ENCODE measurements at regions of chr1 and their contacts with region 1.

Region 1: GRCh38 chr1:8712413-8713231 is 104.8 kb downstream of the RERE start:
- DNase-seq: no peak
- ATAC-seq: peak; percentile 52
- H3K4me3 Mint-ChIP-seq: peak overlapping the region; percentile 23
- H3K27ac Mint-ChIP-seq: peak overlapping the region; percentile 52
- H3K4me1 Mint-ChIP-seq: peaks cover 14% of the 10 kb centered on the region
- H3K27me3 Mint-ChIP-seq: no peaks in the 10 kb centered on the region

Region 2: GRCh38 chr1:8702071-8702849 is 10.4 kb before region 1 on chr1:
- POLR2A ChIA-PET with region 1: interaction called, 10 read pairs
- DNase-seq: no peak
- ATAC-seq: no peak
- H3K4me3 Mint-ChIP-seq: peak overlapping the region; percentile 84
- H3K27ac Mint-ChIP-seq: peak overlapping the region; percentile 89
- H3K4me1 Mint-ChIP-seq: peaks cover 38% of the 10 kb centered on the region
- H3K27me3 Mint-ChIP-seq: peaks cover 23% of the 10 kb centered on the region

Region 3: DNA sequence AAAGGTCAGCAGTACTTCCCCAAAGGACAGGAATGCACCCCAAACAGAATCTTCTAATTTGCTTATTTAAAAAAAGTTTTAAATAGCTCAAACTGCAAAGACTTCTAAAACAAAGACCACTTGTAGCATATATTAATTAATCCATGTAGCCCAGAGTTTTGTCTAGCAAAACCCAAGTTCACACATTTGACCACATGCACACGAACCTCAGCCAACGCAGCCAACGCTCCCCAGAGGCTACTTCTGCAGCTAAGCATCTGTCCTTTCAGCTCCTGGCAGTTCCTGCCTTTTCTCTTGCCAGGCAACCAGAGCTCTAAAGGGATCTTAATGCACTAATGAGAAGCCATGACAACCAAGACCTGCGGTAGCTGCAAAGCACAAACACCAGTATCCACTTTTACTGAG is 15.2 kb after region 1 on chr1:
- POLR2A ChIA-PET with region 1: no interaction called
- DNase-seq: no peak
- ATAC-seq: no peak
- H3K4me3 Mint-ChIP-seq: no peak overlapping the region
- H3K27ac Mint-ChIP-seq: no peak overlapping the region
- H3K4me1 Mint-ChIP-seq: peaks cover 16% of the 10 kb centered on the region
- H3K27me3 Mint-ChIP-seq: no peaks in the 10 kb centered on the region